ENCODE measurements at regions of chr19 and their contacts with region 1.

Region 1: DNA sequence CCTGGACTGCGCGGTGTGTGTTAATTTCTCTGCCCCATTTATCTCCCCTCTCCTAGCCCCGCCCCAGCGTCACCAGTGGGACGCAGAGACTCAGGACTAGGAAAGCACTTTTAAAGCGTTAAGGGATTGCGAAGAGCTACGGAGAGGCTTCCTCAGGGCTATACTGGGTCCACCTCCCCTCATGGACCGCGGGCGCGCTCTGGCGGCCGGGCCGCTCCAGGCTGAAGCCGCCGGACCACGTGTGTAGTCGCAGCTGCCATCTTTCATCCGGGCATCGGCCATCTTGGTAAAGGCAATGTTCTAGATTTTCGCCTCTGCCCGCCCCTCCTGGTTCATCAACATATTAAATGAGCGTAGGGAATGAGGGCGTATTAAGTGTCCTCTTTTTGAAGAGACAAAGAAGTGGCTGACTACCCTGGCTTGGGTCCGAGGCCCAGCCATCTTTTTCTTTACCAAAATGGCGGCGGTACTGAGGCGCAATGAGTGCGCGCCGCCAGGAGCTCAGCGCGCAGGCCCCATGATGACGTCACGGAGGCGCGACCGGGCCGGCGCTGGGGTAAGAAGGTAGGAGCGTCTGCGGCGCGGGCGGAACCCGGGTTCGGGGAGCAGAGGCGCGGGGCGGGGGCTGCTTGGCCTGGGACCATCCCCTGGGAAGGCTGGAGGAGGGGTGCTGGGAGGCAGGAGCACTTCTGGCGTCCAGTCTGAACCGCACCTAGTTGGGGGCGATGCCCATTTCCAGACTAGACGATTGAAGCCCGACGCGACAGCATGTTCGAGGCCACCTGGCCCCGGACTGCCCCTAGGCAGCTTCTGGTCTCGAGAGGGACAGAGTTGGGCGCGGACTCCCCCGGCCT is at the start of gene CCDC124:
- DNase-seq: peak; percentile 36
- H3K4me3 ChIP-seq: peak within 1 kb of the TSS; percentile 98
- H3K27me3 ChIP-seq: no peaks in the 10 kb centered on the region
- CTCF ChIP-seq: peak; percentile 98
- polyA plus RNA-seq, gene CCDC124: 37.6 and 40.8 TPM in 2 replicates

Region 2: DNA sequence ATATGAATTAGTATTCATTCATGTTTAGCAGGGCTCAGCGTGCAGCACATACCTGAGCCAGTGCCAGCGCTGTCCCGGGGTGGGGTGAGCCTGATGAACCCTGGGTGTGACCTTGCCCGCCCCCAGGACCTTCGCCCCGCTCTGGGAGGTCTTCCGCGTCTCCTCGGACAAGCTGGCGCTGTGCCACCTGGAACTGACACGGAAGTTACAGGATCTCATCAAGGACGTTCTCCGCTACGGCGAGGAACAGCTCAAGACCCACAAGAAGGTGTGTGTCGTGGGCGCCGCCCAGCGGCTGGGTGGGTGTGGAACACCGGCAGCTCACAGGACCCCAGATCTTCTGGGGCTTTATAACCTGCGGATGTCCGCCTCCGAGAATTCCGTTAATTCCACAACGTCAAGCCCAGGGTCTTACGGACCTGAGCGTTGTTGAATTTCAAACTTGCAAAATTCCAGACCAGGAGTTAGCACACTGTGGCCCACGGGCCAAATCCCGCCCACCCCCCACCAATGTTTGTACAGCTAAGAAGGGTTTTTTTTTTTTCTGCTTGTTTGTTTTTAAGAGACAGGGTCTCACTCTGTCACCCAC is 166.1 kb before region 1 on chr19:
- CTCF ChIA-PET with region 1: no interaction called
- POLR2A ChIA-PET with region 1: no interaction called
- DNase-seq: no peak
- H3K4me3 ChIP-seq: peak overlapping the region; percentile 10; the same call in 1 of the 2 replicates
- H3K27me3 ChIP-seq: no peaks in the 10 kb centered on the region
- CTCF ChIP-seq: peak; percentile 99

Region 3: GRCh38 chr19:17859533-17860330 is 73.0 kb before region 1 on chr19 and contains the start of gene RPL18A:
- CTCF ChIA-PET with region 1: interaction called, 54 read pairs
- POLR2A ChIA-PET with region 1: interaction called, 13 read pairs
- DNase-seq: peak; percentile 99
- H3K4me3 ChIP-seq: peak within 1 kb of the TSS; percentile 98
- H3K27me3 ChIP-seq: no peaks in the 10 kb centered on the region
- CTCF ChIP-seq: peak; percentile 94
- polyA plus RNA-seq, gene RPL18A: 1,501 and 2,264 TPM in 2 replicates

Region 4: GRCh38 chr19:17865364-17866311 is 67.1 kb before region 1 on chr19:
- CTCF ChIA-PET with region 1: interaction called, 111 read pairs
- POLR2A ChIA-PET with region 1: no interaction called
- DNase-seq: no peak
- H3K4me3 ChIP-seq: no peak overlapping the region
- H3K27me3 ChIP-seq: peaks cover 7% of the 10 kb centered on the region
- CTCF ChIP-seq: no peak

Region 5: DNA sequence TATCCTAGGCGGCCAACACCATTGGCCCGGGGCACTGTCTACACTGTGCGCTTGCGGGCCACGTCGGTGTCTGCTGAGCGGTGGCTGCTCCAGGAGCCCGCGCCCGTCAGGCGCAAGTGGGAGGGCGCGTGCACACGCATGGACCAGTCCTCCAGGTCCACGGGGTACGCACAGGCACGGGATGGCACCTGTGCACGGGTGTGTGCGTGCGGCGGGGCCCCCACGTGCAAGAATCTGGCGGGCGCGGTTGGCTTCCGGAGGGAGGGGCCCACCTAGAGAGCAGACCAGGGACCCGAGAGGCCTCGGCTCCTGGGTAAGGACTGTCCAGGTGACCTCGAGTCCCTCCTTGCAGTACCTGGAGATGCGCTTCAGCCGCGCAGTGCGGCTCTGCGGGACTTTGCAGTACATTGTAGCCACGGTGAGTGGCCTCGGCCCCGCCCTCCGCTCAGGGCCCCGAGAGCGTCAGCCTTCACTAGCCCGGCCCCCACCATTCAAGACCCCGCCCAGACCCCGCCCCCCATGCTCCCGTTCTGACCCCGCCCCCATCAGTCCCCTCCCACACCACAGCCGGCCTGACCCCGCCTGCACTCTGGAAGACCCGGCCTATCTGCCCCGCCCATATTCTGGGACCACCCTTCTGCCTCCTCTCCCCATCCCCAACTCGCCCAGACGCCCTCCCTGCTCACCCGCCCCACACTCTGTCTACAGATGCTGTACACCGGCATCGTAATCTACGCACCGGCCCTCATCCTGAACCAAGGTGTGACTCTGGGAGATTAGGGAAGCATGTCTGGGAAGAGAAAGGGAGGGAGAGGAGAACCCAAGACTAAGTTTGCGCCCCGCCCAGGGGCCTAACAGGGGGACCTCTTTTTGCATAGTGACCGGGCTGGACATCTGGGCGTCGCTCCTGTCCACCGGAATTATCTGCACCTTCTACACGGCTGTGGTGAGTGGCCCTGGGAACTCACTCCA is 58.6 kb before region 1 on chr19:
- CTCF ChIA-PET with region 1: interaction called, 111 read pairs
- POLR2A ChIA-PET with region 1: no interaction called
- DNase-seq: no peak
- H3K4me3 ChIP-seq: no peak overlapping the region
- H3K27me3 ChIP-seq: peaks cover 28% of the 10 kb centered on the region
- CTCF ChIP-seq: no peak

Region 6: GRCh38 chr19:17993076-17993813 is 60.5 kb after region 1 on chr19:
- CTCF ChIA-PET with region 1: interaction called, 169 read pairs
- POLR2A ChIA-PET with region 1: no interaction called
- DNase-seq: no peak
- H3K4me3 ChIP-seq: no peak overlapping the region
- H3K27me3 ChIP-seq: no peaks in the 10 kb centered on the region
- CTCF ChIP-seq: no peak

Region 7: GRCh38 chr19:18000935-18001778 is 68.4 kb after region 1 on chr19:
- CTCF ChIA-PET with region 1: interaction called, 169 read pairs
- POLR2A ChIA-PET with region 1: no interaction called
- DNase-seq: peak; percentile 42
- H3K4me3 ChIP-seq: peak overlapping the region; percentile 87
- H3K27me3 ChIP-seq: no peaks in the 10 kb centered on the region
- CTCF ChIP-seq: no peak